Endothelial cell of umbilical vein (primary cell): ENCODE measurements at regions of chr6 and their contacts with region 1.

Region 1: DNA sequence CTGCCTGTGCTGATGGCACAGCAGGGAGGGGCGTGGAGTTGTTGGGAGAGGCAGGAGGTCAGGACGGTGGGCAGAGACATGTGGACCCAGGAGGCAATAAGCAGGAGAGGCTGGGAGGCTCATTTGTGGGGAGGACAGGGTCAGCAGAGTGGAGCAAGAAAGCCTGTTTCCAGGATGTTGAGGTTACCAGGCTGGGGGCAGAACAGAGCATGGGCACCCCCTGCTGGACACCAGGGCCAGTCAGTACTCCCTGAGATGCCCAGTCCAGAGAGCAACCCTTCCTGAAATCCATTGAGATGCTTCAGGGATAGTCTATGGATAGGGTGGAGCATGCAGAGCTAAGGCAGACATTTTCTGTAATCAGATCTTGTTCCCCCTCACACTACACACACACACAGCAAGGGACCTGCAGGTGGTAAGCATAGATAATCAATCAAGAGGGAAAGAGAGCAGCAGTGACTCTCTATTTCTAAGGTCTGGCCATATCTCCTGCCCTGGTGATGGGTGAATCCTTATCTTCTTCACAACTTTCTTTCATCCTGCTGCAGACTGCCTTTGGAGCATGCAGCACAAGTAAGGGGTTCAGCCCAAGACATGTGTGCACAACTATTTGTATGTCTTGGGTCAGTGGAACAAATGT is 41.7 kb downstream of the MOCS1 start:
- DNase-seq: peak; percentile 69
- H3K4me3 ChIP-seq: no peak overlapping the region
- H3K27ac ChIP-seq: no peak overlapping the region
- H3K4me1 ChIP-seq: peaks cover 10% of the 10 kb centered on the region
- H3K27me3 ChIP-seq: no peaks in the 10 kb centered on the region
- CTCF ChIP-seq: peak; percentile 79 to 94
- POLR2A ChIP-seq: no peak

Region 2: DNA sequence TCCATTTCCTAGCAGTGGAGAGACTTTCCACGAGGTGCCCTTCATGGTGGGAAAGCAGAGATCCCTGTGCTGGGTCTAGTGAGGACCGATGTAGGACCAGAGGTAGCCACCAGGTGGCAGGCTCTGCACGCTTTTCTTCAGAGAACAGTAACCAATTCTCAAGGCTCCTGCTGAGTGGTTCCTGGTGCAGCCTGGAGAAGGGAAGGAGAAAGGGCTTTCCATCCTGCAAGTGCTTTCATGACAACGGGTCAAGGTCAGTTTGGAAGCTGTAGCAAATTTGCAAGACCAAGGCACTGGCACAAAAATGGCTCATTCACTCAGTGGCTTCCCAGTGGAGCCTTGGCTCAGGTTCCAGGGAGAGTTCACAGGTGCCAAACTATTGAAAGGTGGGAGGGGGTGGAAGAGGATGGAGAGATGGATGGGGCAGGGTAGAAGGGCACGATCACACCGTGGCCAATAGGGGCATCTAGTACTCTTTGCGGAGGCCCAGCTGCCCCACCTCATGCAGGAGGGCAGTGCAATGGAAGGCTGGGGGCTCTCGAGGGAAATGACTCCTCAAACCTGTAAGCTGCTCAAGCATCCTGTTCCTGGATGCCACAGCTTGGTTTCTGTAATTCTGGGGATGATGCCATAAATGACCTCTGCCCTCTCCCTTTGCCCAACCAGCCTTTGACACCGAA is 544.6 kb before region 1 on chr6:
- CTCF ChIA-PET with region 1: interaction called, 4 read pairs
- POLR2A ChIA-PET with region 1: no interaction called
- dilution Hi-C with region 1: no loop called
- intact Hi-C with region 1: loop called (anchors 1 kb)
- DNase-seq: peak; percentile 56
- H3K4me3 ChIP-seq: no peak overlapping the region
- H3K27ac ChIP-seq: no peak overlapping the region
- H3K4me1 ChIP-seq: no peaks in the 10 kb centered on the region
- H3K27me3 ChIP-seq: no peaks in the 10 kb centered on the region
- CTCF ChIP-seq: peak; percentile 78 to 87
- POLR2A ChIP-seq: no peak

Region 3: GRCh38 chr6:39361657-39362486 is 530.7 kb before region 1 on chr6:
- CTCF ChIA-PET with region 1: interaction called, 22 read pairs
- POLR2A ChIA-PET with region 1: no interaction called
- dilution Hi-C with region 1: no loop called
- intact Hi-C with region 1: loop called (anchors 1 kb)
- DNase-seq: peak; percentile 53
- H3K4me3 ChIP-seq: no peak overlapping the region
- H3K27ac ChIP-seq: no peak overlapping the region
- H3K4me1 ChIP-seq: no peaks in the 10 kb centered on the region
- H3K27me3 ChIP-seq: no peaks in the 10 kb centered on the region
- CTCF ChIP-seq: peak; percentile 65 to 85
- POLR2A ChIP-seq: no peak

Region 4: DNA sequence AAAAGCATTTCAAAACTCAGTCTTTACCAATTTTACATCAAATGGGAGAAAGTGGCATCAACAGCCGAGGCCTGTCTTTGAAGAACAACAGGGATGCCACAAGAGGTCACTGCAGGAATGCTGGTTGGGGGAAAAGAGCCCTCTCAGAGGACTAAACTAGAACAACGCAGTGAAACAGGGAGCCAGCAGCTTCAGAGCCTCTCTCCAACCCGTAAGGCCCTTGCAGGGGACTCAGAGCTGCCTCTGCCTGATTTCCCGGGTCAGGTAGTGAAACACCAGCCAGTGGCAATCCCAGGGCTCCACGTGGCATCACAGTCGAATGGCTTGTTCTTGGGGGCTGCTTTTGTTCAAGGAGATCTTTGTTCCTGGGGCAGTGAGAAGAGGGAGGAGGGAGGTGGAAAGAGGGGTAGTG is 515.1 kb before region 1 on chr6:
- CTCF ChIA-PET with region 1: interaction called, 12 read pairs
- POLR2A ChIA-PET with region 1: no interaction called
- dilution Hi-C with region 1: no loop called
- intact Hi-C with region 1: loop called (anchors 1 kb)
- DNase-seq: peak; percentile 49
- H3K4me3 ChIP-seq: no peak overlapping the region
- H3K27ac ChIP-seq: no peak overlapping the region
- H3K4me1 ChIP-seq: no peaks in the 10 kb centered on the region
- H3K27me3 ChIP-seq: no peaks in the 10 kb centered on the region
- CTCF ChIP-seq: peak; percentile 47 to 68
- POLR2A ChIP-seq: no peak

Region 5: GRCh38 chr6:39416728-39417127 is 475.9 kb before region 1 on chr6:
- CTCF ChIA-PET with region 1: no interaction called
- POLR2A ChIA-PET with region 1: no interaction called
- dilution Hi-C with region 1: no loop called
- intact Hi-C with region 1: no loop called
- DNase-seq: no peak
- H3K4me3 ChIP-seq: no peak overlapping the region
- H3K27ac ChIP-seq: no peak overlapping the region
- H3K4me1 ChIP-seq: no peaks in the 10 kb centered on the region
- H3K27me3 ChIP-seq: peaks cover 0 to 3% of the 10 kb centered on the region in 2 experiments
- CTCF ChIP-seq: no peak
- POLR2A ChIP-seq: no peak

Region 6: GRCh38 chr6:39791850-39792539 is 100.6 kb before region 1 on chr6 and contains the start of gene DAAM2:
- CTCF ChIA-PET with region 1: no interaction called
- POLR2A ChIA-PET with region 1: no interaction called
- dilution Hi-C with region 1: no loop called
- intact Hi-C with region 1: loop called (anchors 5 kb)
- DNase-seq: peak; percentile 22
- H3K4me3 ChIP-seq: peak within 1 kb of the TSS in 1 of 3 experiments; percentile 18
- H3K27ac ChIP-seq: no peak within 1 kb of the TSS
- H3K4me1 ChIP-seq: no peaks in the 10 kb centered on the region
- H3K27me3 ChIP-seq: peaks cover 10 to 24% of the 10 kb centered on the region in 2 experiments
- CTCF ChIP-seq: no peak
- POLR2A ChIP-seq: no peak
- total RNA-seq, gene DAAM2: 0.18 and 0.42 TPM in 2 replicates

Region 7: DNA sequence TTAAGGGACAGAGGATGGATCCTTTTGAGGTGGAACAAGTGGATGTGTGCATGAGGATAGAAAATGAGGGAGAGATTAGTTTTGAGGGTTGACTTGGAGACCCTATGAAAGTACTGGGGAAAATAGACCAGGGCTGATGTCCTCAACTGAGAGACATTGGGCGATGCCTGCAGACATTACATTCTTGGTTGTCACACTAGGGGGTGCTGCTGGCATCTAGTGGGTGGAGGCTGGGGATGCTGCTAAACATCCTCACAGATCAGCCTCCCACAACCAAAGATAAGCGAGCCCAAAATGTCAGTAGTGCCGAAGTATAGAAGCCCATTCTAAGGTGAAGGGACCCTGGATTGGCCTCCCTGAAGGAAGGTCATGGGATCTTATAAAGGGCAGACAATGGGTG is 21.7 kb before region 1 on chr6:
- CTCF ChIA-PET with region 1: interaction called, 313 read pairs
- POLR2A ChIA-PET with region 1: no interaction called
- dilution Hi-C with region 1: no loop called
- intact Hi-C with region 1: loop called (anchors 1 kb)
- DNase-seq: no peak
- H3K4me3 ChIP-seq: no peak overlapping the region
- H3K27ac ChIP-seq: no peak overlapping the region
- H3K4me1 ChIP-seq: no peaks in the 10 kb centered on the region
- H3K27me3 ChIP-seq: peaks cover 0 to 2% of the 10 kb centered on the region in 2 experiments
- CTCF ChIP-seq: peak in 1 of 2 donors; percentile 14
- POLR2A ChIP-seq: no peak